ENCODE measurements at regions of chr1 and their contacts with region 1.

Region 1: GRCh38 chr1:210360852-210361477 is 32.3 kb downstream of the HHAT start:
- DNase-seq: no peak
- ATAC-seq: peak; percentile 49 to 56
- H3K4me3 ChIP-seq: no peak overlapping the region
- H3K27ac ChIP-seq: no peak overlapping the region
- H3K4me1 ChIP-seq: no peaks in the 10 kb centered on the region
- H3K27me3 ChIP-seq: no peaks in the 10 kb centered on the region

Region 2: DNA sequence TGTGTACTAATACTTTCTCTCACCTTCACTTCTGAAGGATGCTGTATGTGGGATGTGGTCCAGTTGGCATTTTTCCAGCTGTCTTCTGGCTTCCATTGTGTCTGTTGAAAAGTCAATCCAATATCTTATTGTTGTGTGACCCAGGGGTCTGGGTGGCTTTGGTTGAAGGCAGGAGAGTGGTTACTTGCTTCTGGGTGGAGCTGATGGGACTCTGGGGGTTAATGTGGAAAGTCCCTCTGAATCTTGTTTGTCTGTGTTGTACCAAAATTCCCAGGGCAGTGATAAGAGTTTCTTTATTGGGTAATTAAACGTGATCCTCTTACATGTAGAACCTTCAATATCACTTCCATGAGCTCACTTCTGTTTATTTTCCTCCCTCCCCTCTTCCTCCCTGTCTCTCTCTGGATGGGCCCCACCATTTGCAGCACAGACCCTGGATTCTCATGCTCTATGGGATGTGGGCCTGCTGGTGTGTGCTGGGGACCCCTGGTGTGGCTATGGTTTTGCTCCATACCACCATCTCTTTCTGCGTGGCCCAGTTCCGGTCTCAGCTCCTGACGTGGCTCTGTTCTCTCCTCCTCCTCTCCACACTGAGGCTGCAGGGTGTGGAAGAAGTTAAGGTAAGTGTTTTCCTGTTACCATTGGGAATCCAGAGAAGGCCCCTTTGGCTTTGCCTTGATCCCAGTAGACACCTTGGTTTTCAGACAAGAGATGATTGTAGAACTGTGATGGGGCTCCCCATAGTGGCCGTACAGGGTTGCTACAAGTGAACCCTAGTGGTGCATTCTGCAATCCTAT is 39.3 kb after region 1 on chr1:
- intact Hi-C with region 1: loop called in 2 of 4 experiments (anchors 5 kb)
- DNase-seq: peak; percentile 44 to 74 (median 68)
- ATAC-seq: peak; percentile 91 to 94
- H3K4me3 ChIP-seq: no peak overlapping the region
- H3K27ac ChIP-seq: no peak overlapping the region
- H3K4me1 ChIP-seq: peaks cover 2% of the 10 kb centered on the region
- H3K27me3 ChIP-seq: no peaks in the 10 kb centered on the region